ENCODE measurements at regions of chr14 and their contacts with region 1.

Region 1: DNA sequence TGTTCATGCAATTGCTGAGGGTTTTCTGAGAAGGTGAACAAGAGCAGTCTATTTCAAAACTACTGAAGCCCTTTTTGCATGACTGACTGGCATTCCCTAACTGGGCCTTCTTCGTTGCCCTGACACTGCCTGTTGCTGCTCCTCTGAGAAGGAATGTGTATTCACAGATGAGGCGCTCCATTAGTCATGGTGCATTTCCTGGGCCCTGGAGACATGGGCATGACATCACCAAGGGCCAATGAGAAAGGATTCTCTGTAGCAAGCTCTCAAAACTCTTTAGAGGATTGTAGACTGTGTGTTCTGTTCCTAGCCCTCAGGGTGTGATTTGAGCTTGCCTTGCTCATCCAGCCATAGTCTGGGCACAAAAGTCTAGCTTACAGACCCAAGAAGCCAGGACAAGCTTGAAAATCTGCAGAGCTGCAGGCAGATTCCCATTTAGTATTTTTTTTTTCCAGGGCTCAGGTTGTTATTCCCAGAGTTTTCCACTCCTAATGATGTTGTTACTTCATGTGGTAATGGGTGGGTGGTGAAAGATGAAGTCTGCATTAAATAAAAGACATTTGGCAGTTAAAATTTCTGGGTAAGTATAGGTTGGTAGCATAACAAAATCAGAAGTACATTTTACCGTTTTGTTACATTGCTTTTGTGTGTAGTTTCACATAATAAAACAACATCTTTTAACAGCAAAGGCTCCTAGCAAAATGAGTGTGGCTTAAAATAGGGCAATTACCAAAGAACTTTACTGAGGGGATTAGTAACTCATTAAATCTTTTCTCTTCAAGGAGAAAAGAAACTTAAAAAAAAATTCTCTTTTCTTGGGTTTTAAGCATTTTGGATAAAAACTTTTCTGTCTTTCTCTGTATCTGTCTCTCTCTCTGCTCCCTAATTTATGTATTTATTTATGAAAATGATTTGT is 318.4 kb downstream of the RAD51B start:
- DNase-seq: peak; percentile 98
- H3K4me3 Mint-ChIP-seq: peak overlapping the region; percentile 16
- H3K27ac Mint-ChIP-seq: peak overlapping the region; percentile 94
- H3K4me1 Mint-ChIP-seq: peaks cover 50% of the 10 kb centered on the region
- H3K27me3 Mint-ChIP-seq: no peaks in the 10 kb centered on the region
- CTCF ChIP-seq: no peak

Region 2: GRCh38 chr14:68157971-68158371 is 20.0 kb after region 1 on chr14:
- CTCF ChIA-PET with region 1: no interaction called
- POLR2A ChIA-PET with region 1: interaction called, 18 read pairs
- intact Hi-C with region 1: no loop called
- DNase-seq: peak; percentile 60
- H3K4me3 Mint-ChIP-seq: peak overlapping the region; percentile 30
- H3K27ac Mint-ChIP-seq: peak overlapping the region; percentile 96
- H3K4me1 Mint-ChIP-seq: peaks cover 18% of the 10 kb centered on the region
- H3K27me3 Mint-ChIP-seq: no peaks in the 10 kb centered on the region
- CTCF ChIP-seq: no peak

Region 3: DNA sequence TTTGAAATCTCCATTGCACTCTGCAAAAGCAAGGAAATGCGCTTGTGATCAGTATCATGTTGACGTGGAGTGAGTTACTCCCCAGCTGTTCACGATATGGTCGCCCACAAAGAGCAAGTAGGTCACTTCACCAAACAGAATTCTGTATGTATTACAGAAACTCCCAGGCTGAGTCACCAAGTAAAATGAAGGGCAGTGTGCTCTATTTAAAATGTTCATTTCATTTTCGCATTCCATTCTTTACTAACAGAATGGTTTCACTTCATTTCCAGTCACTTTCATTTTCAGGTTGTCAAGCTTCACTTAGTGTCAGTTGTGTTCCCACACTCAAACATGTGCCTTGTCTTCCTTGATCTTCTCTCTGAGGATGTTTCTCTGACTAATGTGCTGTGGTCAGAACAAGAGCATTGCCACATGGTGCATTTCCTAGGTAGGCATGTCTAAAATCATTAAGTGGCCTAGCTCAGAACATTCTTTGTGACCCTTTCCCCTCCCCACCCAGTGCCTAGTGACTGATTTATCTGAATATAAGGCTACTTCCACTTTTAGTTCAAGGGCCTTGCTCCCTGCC is 72.9 kb after region 1 on chr14:
- CTCF ChIA-PET with region 1: no interaction called
- POLR2A ChIA-PET with region 1: interaction called, 8 read pairs
- intact Hi-C with region 1: loop called (anchors 2 kb)
- DNase-seq: peak; percentile 79
- H3K4me3 Mint-ChIP-seq: peak overlapping the region; percentile 56
- H3K27ac Mint-ChIP-seq: peak overlapping the region; percentile 87
- H3K4me1 Mint-ChIP-seq: peaks cover 13% of the 10 kb centered on the region
- H3K27me3 Mint-ChIP-seq: no peaks in the 10 kb centered on the region
- CTCF ChIP-seq: no peak

Region 4: DNA sequence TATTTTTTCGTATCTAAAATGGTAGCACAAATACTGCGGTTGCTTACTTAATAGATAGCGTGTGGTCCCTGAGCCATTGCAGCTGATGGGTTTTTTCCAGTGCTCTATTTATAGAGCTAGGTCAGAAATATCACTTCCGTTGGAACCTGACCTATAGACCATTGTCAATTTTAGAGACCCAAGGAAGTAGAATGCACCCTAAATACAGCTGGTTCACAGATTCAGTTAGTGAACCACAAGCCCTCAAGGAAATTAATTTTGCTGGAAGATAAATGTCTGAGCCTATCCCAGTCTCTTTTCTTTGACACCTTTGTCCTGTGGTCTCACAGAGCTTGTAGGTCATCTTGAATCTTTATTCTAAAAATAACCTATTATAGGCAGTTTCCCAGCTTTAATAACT is 263.9 kb after region 1 on chr14:
- CTCF ChIA-PET with region 1: no interaction called
- POLR2A ChIA-PET with region 1: no interaction called
- intact Hi-C with region 1: loop called (anchors 2 kb)
- DNase-seq: no peak
- H3K4me3 Mint-ChIP-seq: no peak overlapping the region
- H3K27ac Mint-ChIP-seq: peak overlapping the region; percentile 59
- H3K4me1 Mint-ChIP-seq: peaks cover 47% of the 10 kb centered on the region
- H3K27me3 Mint-ChIP-seq: no peaks in the 10 kb centered on the region
- CTCF ChIP-seq: no peak

Measured in MCF 10A (cell line).